ENCODE measurements at regions of chr2 and their contacts with region 1.

Region 1: DNA sequence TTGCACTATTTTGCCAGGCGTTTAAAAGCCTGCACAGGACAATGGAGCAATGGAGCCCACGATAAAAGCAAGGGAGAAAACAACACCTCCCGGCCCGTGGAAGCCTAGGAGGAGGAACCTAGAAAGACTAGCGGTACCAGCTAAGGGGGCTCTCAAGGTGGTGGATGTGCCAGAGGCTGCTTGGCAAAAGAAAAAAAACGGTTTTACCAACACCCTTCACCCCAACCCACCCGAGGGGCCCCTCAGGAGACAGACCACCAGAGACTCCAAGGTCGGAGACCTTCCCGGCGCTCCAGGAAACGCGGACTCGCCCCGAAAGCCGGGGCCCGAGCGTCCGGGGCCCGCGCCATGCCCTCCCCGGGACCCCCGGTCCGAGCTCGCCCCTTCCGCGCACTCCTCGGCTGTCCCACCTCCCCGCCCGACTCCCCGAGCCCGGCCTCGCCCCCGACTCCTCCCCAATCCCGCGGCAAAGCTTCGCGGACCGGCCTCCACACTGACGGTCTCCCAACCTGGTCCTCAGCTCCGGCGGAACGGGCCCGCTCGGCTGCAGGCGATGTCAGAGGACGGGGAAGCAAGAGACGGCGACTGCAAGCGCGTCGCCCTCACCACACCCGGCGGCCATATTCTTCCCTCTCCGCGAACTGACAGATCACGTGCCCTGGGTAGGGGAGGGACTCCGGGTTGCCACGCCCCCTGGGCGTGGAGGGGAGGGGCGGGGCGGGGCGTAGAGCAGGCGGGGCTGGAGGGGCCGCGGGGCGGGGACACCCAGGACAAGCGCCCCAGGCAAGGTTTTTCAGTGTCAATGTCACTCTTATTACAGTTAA is at the start of gene KIDINS220:
- DNase-seq: peak; percentile 72
- H3K4me3 Mint-ChIP-seq: peak within 1 kb of the TSS; percentile 100
- H3K27ac Mint-ChIP-seq: peak within 1 kb of the TSS; percentile 96
- H3K4me1 Mint-ChIP-seq: peaks cover 31% of the 10 kb centered on the region
- H3K27me3 Mint-ChIP-seq: no peaks in the 10 kb centered on the region
- total RNA-seq, gene KIDINS220: 24.3 and 24.5 TPM in 2 replicates

Region 2: DNA sequence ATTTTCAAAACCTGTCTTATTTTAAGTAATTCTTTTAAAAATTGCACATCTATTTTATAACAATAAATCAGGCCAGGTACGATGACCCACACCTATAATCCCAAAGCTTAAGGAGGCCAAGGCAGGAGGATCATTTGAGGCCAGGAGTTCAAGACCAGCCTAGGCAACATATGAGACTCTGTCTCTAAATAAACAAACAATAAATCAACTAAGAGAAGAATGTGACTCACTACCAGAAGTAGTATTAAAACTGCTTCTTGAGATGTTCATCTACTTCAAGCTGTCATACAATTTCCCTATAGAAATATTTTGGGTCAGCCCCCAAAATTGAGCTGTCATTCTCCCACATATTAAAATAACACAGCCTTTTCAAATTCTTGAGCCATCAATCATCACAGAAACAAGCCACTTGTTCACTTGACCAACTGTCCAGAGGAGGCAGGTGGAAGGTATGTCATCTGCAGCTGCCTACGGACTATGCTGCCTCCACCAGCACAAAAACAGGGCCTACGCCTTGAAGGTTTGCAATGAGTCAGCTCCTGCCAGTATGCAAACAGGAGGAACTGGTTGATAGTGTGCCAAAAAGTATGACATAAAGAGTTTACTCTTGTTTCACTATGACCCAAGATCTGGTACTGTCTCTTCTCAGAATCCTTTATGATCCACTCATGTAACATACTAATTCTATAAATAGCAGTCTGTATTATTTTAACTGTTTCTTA is 33.4 kb before region 1 on chr2:
- intact Hi-C with region 1: loop called (anchors 1 kb)
- DNase-seq: peak; percentile 47
- H3K4me3 Mint-ChIP-seq: no peak overlapping the region
- H3K27ac Mint-ChIP-seq: peak overlapping the region; percentile 83
- H3K4me1 Mint-ChIP-seq: peaks cover 28% of the 10 kb centered on the region
- H3K27me3 Mint-ChIP-seq: no peaks in the 10 kb centered on the region

Region 3: GRCh38 chr2:9003616-9004337 is 166.6 kb after region 1 on chr2 and contains the start of gene MBOAT2:
- intact Hi-C with region 1: loop called (anchors 1 kb)
- DNase-seq: peak; percentile 79
- H3K4me3 Mint-ChIP-seq: peak within 1 kb of the TSS; percentile 84
- H3K27ac Mint-ChIP-seq: peak within 1 kb of the TSS; percentile 65
- H3K4me1 Mint-ChIP-seq: peaks cover 23% of the 10 kb centered on the region
- H3K27me3 Mint-ChIP-seq: peaks cover 19% of the 10 kb centered on the region
- total RNA-seq, gene MBOAT2: 2.9 and 4.5 TPM in 2 replicates

Measured in activated T-helper 1 cell treated with anti-CD3 and anti-CD28 coated beads, Interleukin-12 subunit alpha, Interleukin-12 subunit beta, Interleukin-2, Interleukin-4 antibody, amounts not matched to agents 30 ng/mL and 10 ng/mL and 1 ng/mL, durations not matched to agents 14 hours and 24 hours and 36 hours (primary cell).